ENCODE measurements at regions of chr15 and their contacts with region 1.

Region 1: GRCh38 chr15:64067564-64068030 is 21.3 kb upstream of the DAPK2 start:
- DNase-seq: peak; percentile 25
- H3K4me3 ChIP-seq: no peak overlapping the region
- H3K27ac ChIP-seq: no peak overlapping the region
- H3K4me1 ChIP-seq: peaks cover 37% of the 10 kb centered on the region
- H3K27me3 ChIP-seq: no peaks in the 10 kb centered on the region
- CTCF ChIP-seq: peak; percentile 91

Region 2: GRCh38 chr15:63752075-63752684 is 315.4 kb before region 1 on chr15:
- intact Hi-C with region 1: loop called (anchors 5 kb)
- DNase-seq: no peak
- H3K4me3 ChIP-seq: no peak overlapping the region
- H3K27ac ChIP-seq: no peak overlapping the region
- H3K4me1 ChIP-seq: peaks cover 5% of the 10 kb centered on the region
- H3K27me3 ChIP-seq: no peaks in the 10 kb centered on the region
- CTCF ChIP-seq: peak; percentile 82

Region 3: DNA sequence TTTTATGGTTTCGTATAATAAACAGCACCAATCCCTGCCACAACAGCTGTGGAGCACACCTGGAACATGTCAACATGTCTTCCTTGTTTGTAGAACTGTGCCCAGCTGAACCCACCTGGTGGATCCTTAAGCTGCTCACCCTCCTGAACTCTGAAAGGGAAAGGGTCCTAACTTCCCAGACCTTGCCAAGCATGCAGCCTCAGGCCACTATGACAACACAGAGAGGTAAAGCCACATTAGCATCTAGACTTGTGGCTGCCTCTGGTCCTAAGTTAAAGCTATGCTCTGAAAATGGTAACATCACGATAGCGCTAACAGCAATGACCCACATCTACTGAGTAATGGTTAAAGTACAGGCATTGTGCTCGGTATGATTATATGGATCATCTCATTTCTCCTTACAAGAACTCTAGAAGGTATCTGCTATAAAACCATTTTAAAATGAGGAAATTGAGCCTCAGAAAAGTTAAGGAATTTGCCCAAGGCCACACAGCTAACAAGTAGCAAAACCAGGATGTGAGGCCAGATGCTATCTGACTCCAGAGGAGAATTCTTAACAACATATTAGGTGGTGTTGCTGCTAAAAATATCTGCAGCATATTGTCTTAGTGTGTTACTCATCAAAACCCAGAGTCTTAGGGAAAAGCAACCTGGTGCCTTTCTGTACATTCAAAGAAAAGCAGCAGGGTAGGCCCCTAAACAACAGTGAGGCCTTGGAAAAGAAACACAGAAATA is 210.7 kb before region 1 on chr15:
- intact Hi-C with region 1: no loop called
- DNase-seq: no peak
- H3K4me3 ChIP-seq: no peak overlapping the region
- H3K27ac ChIP-seq: peak overlapping the region; percentile 79
- H3K4me1 ChIP-seq: peaks cover 42% of the 10 kb centered on the region
- H3K27me3 ChIP-seq: no peaks in the 10 kb centered on the region
- CTCF ChIP-seq: no peak

Measured in left ventricle myocardium inferior (tissue), 1 donor.